ENCODE measurements at regions of chr1 and their contacts with region 1.

Region 1: DNA sequence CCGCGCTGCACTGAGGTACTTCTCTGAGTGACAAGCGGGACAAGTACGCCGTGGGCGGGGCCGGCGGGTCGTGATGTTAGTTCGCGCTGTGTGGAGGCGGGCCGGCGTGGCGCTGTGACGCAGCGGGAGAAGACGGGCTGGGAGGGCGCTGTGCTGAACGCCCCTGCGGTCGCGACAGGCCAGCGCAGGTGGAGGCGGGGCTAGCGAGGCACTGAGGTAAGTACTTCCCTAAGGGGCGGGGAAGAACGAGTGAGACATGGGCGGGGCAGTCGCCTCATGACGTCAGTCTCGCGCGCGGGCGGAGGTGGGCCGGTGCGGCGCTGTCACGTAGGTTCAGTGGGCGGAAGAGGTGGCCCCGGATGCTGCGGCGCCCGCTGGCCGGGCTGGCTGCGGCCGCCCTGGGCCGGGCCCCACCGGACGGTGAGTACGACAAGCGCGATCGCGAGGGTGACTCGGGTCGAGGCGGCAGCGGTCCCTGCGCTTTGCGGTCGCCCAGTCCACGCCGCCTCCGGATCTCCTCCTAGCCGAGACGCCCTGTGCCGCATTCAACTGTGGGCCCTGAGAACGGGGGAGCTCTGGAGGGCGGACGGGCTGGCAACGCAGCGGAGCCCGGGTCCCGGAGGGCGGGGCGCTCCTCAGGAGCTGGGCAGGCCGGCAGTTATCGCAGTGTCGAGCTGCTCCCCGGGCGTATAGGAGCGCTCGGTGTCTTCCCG is at the start of gene GUK1:
- DNase-seq: peak; percentile 99 to 100 (median 100)
- ATAC-seq: peak; percentile 84
- H3K4me3 Mint-ChIP-seq: peak within 1 kb of the TSS; percentile 83 to 99 (median 96)
- H3K27ac Mint-ChIP-seq: peak within 1 kb of the TSS; percentile 96 to 100 (median 100)
- H3K4me1 Mint-ChIP-seq: peaks cover 10 to 66% (median 42%) of the 10 kb centered on the region in 4 donors
- H3K27me3 Mint-ChIP-seq: no peaks in the 10 kb centered on the region
- polyA plus RNA-seq, gene GUK1: 369 to 466 (median 374) TPM

Region 2: GRCh38 chr1:228154670-228155571 is 14.8 kb after region 1 on chr1:
- POLR2A ChIA-PET with region 1: interaction called, 49 read pairs
- DNase-seq: peak in 5 of 10 donors; percentile 31 to 50 (median 41)
- ATAC-seq: peak; percentile 43 to 70
- H3K4me3 Mint-ChIP-seq: peak overlapping the region in 9 of 10 donors; percentile 11 to 75 (median 55)
- H3K27ac Mint-ChIP-seq: peak overlapping the region; percentile 40 to 94 (median 86)
- H3K4me1 Mint-ChIP-seq: peaks cover 15 to 44% (median 31%) of the 10 kb centered on the region in 4 donors
- H3K27me3 Mint-ChIP-seq: no peaks in the 10 kb centered on the region